ENCODE measurements at regions of chr17 and their contacts with region 1.

Region 1: DNA sequence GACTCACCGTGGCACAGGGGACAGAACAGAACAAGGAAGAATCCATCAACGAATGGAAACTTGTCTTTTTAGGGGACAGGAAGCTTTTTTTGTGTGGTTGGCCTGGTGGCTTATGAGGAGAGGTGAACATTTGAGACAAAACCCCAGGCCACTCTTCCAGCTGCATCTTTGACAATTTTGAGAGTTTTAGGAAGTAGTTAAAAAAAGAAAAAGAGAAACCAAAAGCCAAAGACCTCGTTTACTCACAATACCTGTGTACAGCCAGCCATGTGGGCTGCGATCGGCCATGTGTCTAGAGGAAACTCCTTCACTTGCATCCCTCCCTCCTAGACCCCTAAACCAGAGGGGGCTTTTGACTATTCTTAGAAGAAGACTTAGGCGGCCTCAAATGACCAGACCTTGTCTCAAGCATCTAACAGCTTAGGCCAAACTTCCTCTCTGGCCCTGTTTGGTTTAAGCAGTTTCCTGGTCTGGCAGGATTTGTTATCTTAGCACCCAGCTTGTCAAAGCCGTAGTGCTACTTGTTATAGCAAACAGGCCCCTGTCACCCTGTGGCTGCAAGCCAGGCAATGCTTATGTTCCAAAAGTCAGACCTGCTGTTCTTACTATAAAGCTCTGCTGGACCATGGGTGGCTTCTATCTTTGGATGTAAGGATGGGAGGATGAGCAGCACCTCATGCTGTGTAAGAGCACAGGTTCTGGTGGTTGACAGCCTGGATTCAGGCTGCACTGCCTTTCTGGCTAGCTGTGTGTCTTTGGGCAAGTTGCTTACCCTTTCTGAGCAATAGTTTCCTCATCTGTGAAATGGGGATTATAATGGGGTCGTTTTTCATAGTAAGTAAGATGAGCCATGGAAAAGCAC is 17.7 kb downstream of the KSR1 start:
- DNase-seq: peak; percentile 93
- ATAC-seq: peak; percentile 25
- H3K4me3 Mint-ChIP-seq: peak overlapping the region; percentile 50
- H3K27ac Mint-ChIP-seq: peak overlapping the region; percentile 98
- H3K4me1 Mint-ChIP-seq: peaks cover 94% of the 10 kb centered on the region
- H3K27me3 Mint-ChIP-seq: no peaks in the 10 kb centered on the region

Region 2: GRCh38 chr17:27293898-27294688 is 179.9 kb before region 1 on chr17 and contains the start of gene WSB1:
- CTCF ChIA-PET with region 1: no interaction called
- POLR2A ChIA-PET with region 1: interaction called, 10 read pairs
- intact Hi-C with region 1: loop called (anchors 1 to 5 kb)
- DNase-seq: peak; percentile 96
- ATAC-seq: peak; percentile 86
- H3K4me3 Mint-ChIP-seq: peak within 1 kb of the TSS; percentile 89
- H3K27ac Mint-ChIP-seq: peak within 1 kb of the TSS; percentile 99
- H3K4me1 Mint-ChIP-seq: peaks cover 32% of the 10 kb centered on the region
- H3K27me3 Mint-ChIP-seq: no peaks in the 10 kb centered on the region
- total RNA-seq, gene WSB1: 145 to 190 TPM

Region 3: DNA sequence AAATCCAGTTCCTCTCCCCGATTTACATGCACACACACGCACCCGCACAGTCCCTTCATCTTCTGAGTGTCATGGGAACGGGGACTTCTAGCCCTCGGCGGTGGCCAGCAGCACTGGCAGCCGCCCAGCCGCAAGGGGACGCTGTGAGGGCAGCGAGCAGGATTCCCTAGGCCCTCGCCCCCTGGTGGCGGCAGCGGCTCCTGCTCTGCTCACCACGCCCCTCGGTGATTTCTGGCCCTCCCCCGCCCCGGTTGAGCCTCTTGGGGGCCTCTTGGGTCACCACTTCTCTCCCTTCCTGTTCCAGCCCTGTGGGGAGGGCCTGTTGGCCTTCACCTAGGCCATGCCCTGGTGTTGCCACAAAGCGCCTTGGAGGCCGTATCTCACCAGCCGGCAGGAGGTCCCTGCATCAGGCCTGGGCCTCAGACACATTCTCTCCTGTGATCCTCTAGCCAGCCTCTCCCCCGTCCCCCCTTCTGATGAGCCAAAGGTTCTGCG is 92.9 kb before region 1 on chr17:
- CTCF ChIA-PET with region 1: no interaction called
- POLR2A ChIA-PET with region 1: no interaction called
- intact Hi-C with region 1: loop called in 1 of 2 experiments (anchors 10 kb)
- DNase-seq: peak; percentile 94
- ATAC-seq: peak; percentile 96
- H3K4me3 Mint-ChIP-seq: no peak overlapping the region
- H3K27ac Mint-ChIP-seq: no peak overlapping the region
- H3K4me1 Mint-ChIP-seq: peaks cover 2% of the 10 kb centered on the region
- H3K27me3 Mint-ChIP-seq: peaks cover 23% of the 10 kb centered on the region

Region 4: DNA sequence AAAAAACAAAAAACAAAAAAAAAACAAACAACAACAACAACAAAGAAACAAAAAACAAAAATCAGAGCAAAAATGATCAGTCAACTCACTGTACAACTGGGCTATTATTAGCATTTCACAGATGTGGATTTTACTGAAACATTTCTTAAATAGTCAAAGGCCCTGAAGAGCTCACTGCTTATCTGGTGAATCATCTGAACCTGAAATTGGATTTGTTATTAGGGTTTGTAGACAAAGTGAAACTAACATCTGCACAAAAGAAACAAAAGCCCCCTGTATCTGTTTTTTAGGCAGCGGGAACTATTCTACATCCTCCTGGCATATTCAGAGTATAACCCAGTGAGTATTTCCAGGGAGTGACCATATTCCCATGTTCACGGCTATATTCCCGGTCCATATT is 50.3 kb before region 1 on chr17:
- CTCF ChIA-PET with region 1: no interaction called
- POLR2A ChIA-PET with region 1: no interaction called
- intact Hi-C with region 1: no loop called
- DNase-seq: no peak
- ATAC-seq: no peak
- H3K4me3 Mint-ChIP-seq: no peak overlapping the region
- H3K27ac Mint-ChIP-seq: no peak overlapping the region
- H3K4me1 Mint-ChIP-seq: no peaks in the 10 kb centered on the region
- H3K27me3 Mint-ChIP-seq: no peaks in the 10 kb centered on the region

Region 5: GRCh38 chr17:27496437-27496943 is 22.5 kb after region 1 on chr17:
- CTCF ChIA-PET with region 1: no interaction called
- POLR2A ChIA-PET with region 1: no interaction called
- intact Hi-C with region 1: loop called in 1 of 2 experiments (anchors 2 kb)
- DNase-seq: no peak
- ATAC-seq: no peak
- H3K4me3 Mint-ChIP-seq: no peak overlapping the region
- H3K27ac Mint-ChIP-seq: no peak overlapping the region
- H3K4me1 Mint-ChIP-seq: peaks cover 20% of the 10 kb centered on the region
- H3K27me3 Mint-ChIP-seq: no peaks in the 10 kb centered on the region

Region 6: GRCh38 chr17:27552469-27552779 is 78.4 kb after region 1 on chr17:
- CTCF ChIA-PET with region 1: no interaction called
- POLR2A ChIA-PET with region 1: no interaction called
- intact Hi-C with region 1: no loop called
- DNase-seq: peak; percentile 48
- ATAC-seq: peak; percentile 75
- H3K4me3 Mint-ChIP-seq: no peak overlapping the region
- H3K27ac Mint-ChIP-seq: no peak overlapping the region
- H3K4me1 Mint-ChIP-seq: peaks cover 26% of the 10 kb centered on the region
- H3K27me3 Mint-ChIP-seq: no peaks in the 10 kb centered on the region

Region 7: GRCh38 chr17:27569257-27569722 is 95.3 kb after region 1 on chr17:
- CTCF ChIA-PET with region 1: interaction called, 3 read pairs
- POLR2A ChIA-PET with region 1: interaction called, 3 read pairs
- intact Hi-C with region 1: loop called in 1 of 2 experiments (anchors 1 kb)
- DNase-seq: peak; percentile 83
- ATAC-seq: peak; percentile 70
- H3K4me3 Mint-ChIP-seq: no peak overlapping the region
- H3K27ac Mint-ChIP-seq: peak overlapping the region; percentile 68
- H3K4me1 Mint-ChIP-seq: peaks cover 75% of the 10 kb centered on the region
- H3K27me3 Mint-ChIP-seq: no peaks in the 10 kb centered on the region

Region 8: GRCh38 chr17:27805520-27806146 is 331.7 kb after region 1 on chr17:
- CTCF ChIA-PET with region 1: interaction called, 3 read pairs
- POLR2A ChIA-PET with region 1: no interaction called
- intact Hi-C with region 1: loop called in 1 of 2 experiments (anchors 2 kb)
- DNase-seq: peak; percentile 88
- ATAC-seq: peak; percentile 54
- H3K4me3 Mint-ChIP-seq: peak overlapping the region; percentile 50
- H3K27ac Mint-ChIP-seq: peak overlapping the region; percentile 94
- H3K4me1 Mint-ChIP-seq: peaks cover 41% of the 10 kb centered on the region
- H3K27me3 Mint-ChIP-seq: no peaks in the 10 kb centered on the region

Region 9: GRCh38 chr17:28047806-28048205 is 573.8 kb after region 1 on chr17:
- CTCF ChIA-PET with region 1: no interaction called
- POLR2A ChIA-PET with region 1: no interaction called
- intact Hi-C with region 1: loop called (anchors 5 to 10 kb)
- DNase-seq: no peak
- ATAC-seq: no peak
- H3K4me3 Mint-ChIP-seq: no peak overlapping the region
- H3K27ac Mint-ChIP-seq: no peak overlapping the region
- H3K4me1 Mint-ChIP-seq: peaks cover 69% of the 10 kb centered on the region
- H3K27me3 Mint-ChIP-seq: no peaks in the 10 kb centered on the region

Measured in activated CD4-positive, alpha-beta T cell treated with anti-CD3 and anti-CD28 coated beads for 36 hours (primary cell).